OCI-LY7 (cell line): ENCODE measurements at regions of chr15 and their contacts with region 1.

Region 1: GRCh38 chr15:25939122-25939521 is 76.0 kb upstream of the ATP10A start:
- DNase-seq: peak; percentile 92
- H3K4me3 ChIP-seq: peak overlapping the region; percentile 2
- H3K27ac ChIP-seq: peak overlapping the region; percentile 78
- H3K4me1 ChIP-seq: peaks cover 28% of the 10 kb centered on the region
- CTCF ChIP-seq: no peak

Region 2: GRCh38 chr15:25852661-25853524 is 86.2 kb before region 1 on chr15:
- CTCF ChIA-PET with region 1: interaction called, 3 read pairs
- POLR2A ChIA-PET with region 1: interaction called, 6 read pairs
- intact Hi-C with region 1: loop called (anchors 2 kb)
- DNase-seq: peak; percentile 79
- H3K4me3 ChIP-seq: peak overlapping the region; percentile 20
- H3K27ac ChIP-seq: no peak overlapping the region
- H3K4me1 ChIP-seq: peaks cover 56% of the 10 kb centered on the region
- CTCF ChIP-seq: peak; percentile 44

Region 3: GRCh38 chr15:25989327-25989726 is 50.2 kb after region 1 on chr15:
- CTCF ChIA-PET with region 1: no interaction called
- POLR2A ChIA-PET with region 1: no interaction called
- intact Hi-C with region 1: no loop called
- DNase-seq: no peak
- H3K4me3 ChIP-seq: no peak overlapping the region
- H3K27ac ChIP-seq: no peak overlapping the region
- H3K4me1 ChIP-seq: no peaks in the 10 kb centered on the region
- CTCF ChIP-seq: peak; percentile 55; the same call in 1 of the 2 replicates

Region 4: DNA sequence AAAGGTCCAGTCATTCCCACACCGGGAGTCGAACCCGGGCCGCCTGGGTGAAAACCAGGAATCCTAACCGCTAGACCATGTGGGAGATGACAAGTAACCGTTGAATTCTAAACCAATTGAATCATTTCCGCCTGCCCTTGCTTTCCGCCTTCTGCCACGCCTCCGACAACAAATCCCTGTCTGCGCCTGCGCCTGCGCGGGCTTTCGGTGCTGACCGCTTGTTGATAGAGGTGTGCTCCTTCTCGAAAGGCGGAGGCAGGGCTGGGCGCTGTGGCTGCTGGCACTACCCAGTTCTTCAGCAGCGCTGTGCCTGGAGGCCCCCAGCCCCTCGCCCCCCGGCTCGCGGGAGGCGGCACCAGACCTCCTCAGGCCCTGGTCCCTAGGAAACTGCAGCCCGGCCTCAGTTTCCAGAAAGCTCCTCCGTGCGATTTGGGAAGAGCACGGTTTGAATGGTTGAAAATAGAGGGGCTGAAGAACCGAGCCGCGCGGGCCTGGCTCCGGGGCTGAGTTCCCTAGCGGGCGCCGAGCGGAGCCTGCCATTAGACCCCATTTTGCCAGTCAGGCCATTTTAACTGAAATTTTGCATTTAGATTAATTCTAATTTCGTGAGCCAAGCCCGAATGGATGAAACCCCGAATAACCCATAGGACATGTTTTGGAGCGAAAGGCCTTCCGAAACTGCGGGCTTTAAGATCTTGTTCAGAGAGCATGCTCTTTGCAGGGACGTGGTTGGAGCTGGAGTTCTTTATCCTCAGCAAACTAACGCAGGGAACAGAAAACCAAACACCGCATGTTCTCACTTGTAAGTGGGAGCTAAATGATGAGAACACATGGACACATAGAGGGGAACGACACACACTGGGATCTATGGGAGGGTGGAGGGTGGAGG is 143.3 kb after region 1 on chr15:
- CTCF ChIA-PET with region 1: no interaction called
- POLR2A ChIA-PET with region 1: interaction called, 4 read pairs
- intact Hi-C with region 1: loop called (anchors 2 kb)
- DNase-seq: peak; percentile 89
- H3K4me3 ChIP-seq: peak overlapping the region; percentile 68
- H3K27ac ChIP-seq: peak overlapping the region; percentile 67
- H3K4me1 ChIP-seq: peaks cover 16% of the 10 kb centered on the region
- CTCF ChIP-seq: no peak